H1 (cell line): ENCODE measurements at regions of chr10 and their contacts with region 1.

Region 1: GRCh38 chr10:89369156-89370105 is 8.4 kb upstream of the IFIT1B start:
- DNase-seq: no peak
- H3K4me3 ChIP-seq: no peak overlapping the region
- H3K27ac ChIP-seq: no peak overlapping the region
- H3K4me1 ChIP-seq: peaks cover 0 to 6% (median 0%) of the 10 kb centered on the region in 4 experiments; a peak in 1 of 7 replicates
- H3K27me3 ChIP-seq: no peaks in the 10 kb centered on the region
- CTCF ChIP-seq: peak in 2 of 3 experiments; percentile 29 to 49; a peak in 2 of 4 replicates
- EP300 ChIP-seq: no peak
- POLR2A ChIP-seq: no peak
- RAD21 ChIP-seq: peak; percentile 50 to 51

Region 2: DNA sequence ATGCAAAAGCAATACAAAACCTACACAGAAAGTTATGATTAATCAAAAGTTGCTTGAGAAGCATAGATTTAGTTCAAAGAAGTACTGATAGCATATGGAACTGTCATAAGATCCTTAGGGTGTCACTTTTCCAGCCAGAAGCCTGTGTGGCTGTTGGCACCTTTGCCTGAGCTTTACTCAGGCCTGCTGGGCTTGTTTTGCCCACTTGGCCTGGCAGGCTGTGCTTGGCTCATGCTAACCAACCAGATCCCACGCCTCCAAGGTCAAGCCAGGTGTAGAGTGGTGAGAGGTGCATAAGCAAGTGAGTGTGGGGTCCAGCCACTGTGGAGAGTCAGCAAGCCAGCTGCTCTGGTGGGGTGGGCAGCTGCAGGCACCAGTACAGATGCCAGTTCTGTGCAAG is 105.9 kb before region 1 on chr10:
- CTCF ChIA-PET with region 1: interaction called, 44 read pairs
- POLR2A ChIA-PET with region 1: no interaction called
- DNase-seq: no peak
- H3K4me3 ChIP-seq: no peak overlapping the region
- H3K27ac ChIP-seq: no peak overlapping the region
- H3K4me1 ChIP-seq: peaks cover 0 to 3% (median 1%) of the 10 kb centered on the region in 4 experiments; a peak in 3 of 7 replicates
- H3K27me3 ChIP-seq: no peaks in the 10 kb centered on the region
- CTCF ChIP-seq: no peak
- EP300 ChIP-seq: no peak
- POLR2A ChIP-seq: no peak
- RAD21 ChIP-seq: no peak

Region 3: GRCh38 chr10:89295597-89295996 is 73.8 kb before region 1 on chr10:
- CTCF ChIA-PET with region 1: interaction called, 60 read pairs
- POLR2A ChIA-PET with region 1: no interaction called
- DNase-seq: no peak
- H3K4me3 ChIP-seq: no peak overlapping the region
- H3K27ac ChIP-seq: no peak overlapping the region
- H3K4me1 ChIP-seq: no peaks in the 10 kb centered on the region
- H3K27me3 ChIP-seq: no peaks in the 10 kb centered on the region
- CTCF ChIP-seq: no peak
- EP300 ChIP-seq: no peak
- POLR2A ChIP-seq: no peak
- RAD21 ChIP-seq: no peak

Region 4: GRCh38 chr10:89339875-89340274 is 29.6 kb before region 1 on chr10:
- CTCF ChIA-PET with region 1: interaction called, 15 read pairs
- POLR2A ChIA-PET with region 1: no interaction called
- DNase-seq: no peak
- H3K4me3 ChIP-seq: no peak overlapping the region
- H3K27ac ChIP-seq: no peak overlapping the region
- H3K4me1 ChIP-seq: peaks cover 0 to 5% (median 2%) of the 10 kb centered on the region in 4 experiments; a peak in 2 of 7 replicates
- H3K27me3 ChIP-seq: no peaks in the 10 kb centered on the region
- CTCF ChIP-seq: no peak
- EP300 ChIP-seq: no peak
- POLR2A ChIP-seq: no peak
- RAD21 ChIP-seq: no peak

Region 5: DNA sequence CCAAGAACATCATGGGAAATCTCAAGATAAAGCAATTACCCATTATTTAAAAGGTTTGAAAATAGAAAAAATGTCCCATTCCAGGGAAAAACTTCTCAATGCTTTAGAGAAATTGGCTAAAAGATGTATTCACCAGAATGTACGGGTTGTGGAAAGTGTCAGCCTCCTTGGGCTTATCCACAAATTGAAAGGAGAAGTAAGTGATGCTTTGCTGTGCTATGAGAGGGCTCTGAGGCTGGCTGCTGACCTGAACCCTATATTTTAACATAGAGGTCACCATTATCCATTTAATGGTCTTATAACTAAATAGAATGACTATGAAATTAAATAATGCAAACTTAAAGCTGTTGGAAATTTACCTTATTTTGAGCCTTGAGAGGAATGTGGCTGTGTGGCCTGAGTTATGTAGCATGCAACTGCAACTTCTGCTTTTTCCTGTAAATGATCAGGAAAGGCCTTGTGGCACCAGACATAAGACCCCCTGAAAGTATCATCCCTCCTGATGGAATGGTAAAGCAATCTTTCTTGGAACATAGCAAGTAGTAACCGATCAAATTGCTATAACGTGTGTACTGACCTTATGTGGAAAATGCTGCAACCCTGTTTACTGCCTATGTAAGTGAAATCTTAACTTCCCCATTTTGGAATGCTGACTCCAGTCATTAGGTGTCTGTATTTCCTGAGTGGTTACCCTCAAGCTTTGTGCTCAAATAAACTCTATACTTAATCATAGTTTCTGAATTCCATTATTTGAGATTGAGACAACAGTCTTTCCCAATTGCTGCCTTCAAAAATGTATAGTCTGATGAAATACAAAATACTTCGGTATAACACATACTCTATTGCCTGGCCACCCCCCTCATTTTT is 15.3 kb after region 1 on chr10:
- CTCF ChIA-PET with region 1: interaction called, 30 read pairs
- POLR2A ChIA-PET with region 1: no interaction called
- DNase-seq: no peak
- H3K4me3 ChIP-seq: no peak overlapping the region
- H3K27ac ChIP-seq: no peak overlapping the region
- H3K4me1 ChIP-seq: no peaks in the 10 kb centered on the region
- H3K27me3 ChIP-seq: no peaks in the 10 kb centered on the region
- CTCF ChIP-seq: no peak
- EP300 ChIP-seq: no peak
- POLR2A ChIP-seq: no peak
- RAD21 ChIP-seq: no peak

Region 6: GRCh38 chr10:89494575-89494974 is 125.1 kb after region 1 on chr10:
- CTCF ChIA-PET with region 1: no interaction called
- POLR2A ChIA-PET with region 1: no interaction called
- DNase-seq: no peak
- H3K4me3 ChIP-seq: no peak overlapping the region
- H3K27ac ChIP-seq: no peak overlapping the region; the same call in 1 of the 2 replicates
- H3K4me1 ChIP-seq: peaks cover 0 to 10% (median 1%) of the 10 kb centered on the region in 4 experiments; a peak in 2 of 7 replicates
- H3K27me3 ChIP-seq: peaks cover 0 to 2% (median 0%) of the 10 kb centered on the region in 4 experiments; a peak in 1 of 7 replicates
- CTCF ChIP-seq: no peak
- EP300 ChIP-seq: no peak
- POLR2A ChIP-seq: no peak
- RAD21 ChIP-seq: no peak